ENCODE measurements at regions of chr10 and their contacts with region 1.

Region 1: GRCh38 chr10:24920907-24921881 is 31.2 kb downstream of the PRTFDC1 start:
- DNase-seq: peak; percentile 33
- H3K4me3 Mint-ChIP-seq: peak overlapping the region; percentile 53
- H3K27ac Mint-ChIP-seq: peak overlapping the region; percentile 92
- H3K4me1 Mint-ChIP-seq: peaks cover 30% of the 10 kb centered on the region
- H3K27me3 Mint-ChIP-seq: no peaks in the 10 kb centered on the region

Region 2: GRCh38 chr10:24706479-24707118 is 214.6 kb before region 1 on chr10:
- intact Hi-C with region 1: loop called (anchors 5 kb)
- DNase-seq: peak; percentile 26
- H3K4me3 Mint-ChIP-seq: no peak overlapping the region
- H3K27ac Mint-ChIP-seq: no peak overlapping the region
- H3K4me1 Mint-ChIP-seq: peaks cover 23% of the 10 kb centered on the region
- H3K27me3 Mint-ChIP-seq: no peaks in the 10 kb centered on the region

Region 3: DNA sequence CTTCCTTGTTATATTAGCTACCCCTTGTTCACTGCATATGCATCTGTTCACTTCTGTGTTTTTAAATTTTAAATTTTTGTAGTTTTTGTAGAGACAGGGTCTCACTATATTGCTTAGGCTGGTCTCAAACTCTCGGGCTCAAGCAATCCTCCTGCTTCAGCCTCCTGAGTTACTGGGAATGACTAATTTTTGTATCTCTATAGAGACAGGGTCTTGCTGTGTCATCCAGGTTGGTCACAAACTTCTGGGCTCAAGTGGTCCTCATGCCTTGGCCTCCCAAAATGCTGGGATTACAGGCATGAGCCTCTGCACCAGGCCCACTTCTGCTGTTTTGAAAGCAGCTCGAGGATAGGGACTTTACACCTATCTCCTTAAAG is 33.4 kb before region 1 on chr10:
- intact Hi-C with region 1: loop called (anchors 1 kb)
- DNase-seq: no peak
- H3K4me3 Mint-ChIP-seq: peak overlapping the region; percentile 21
- H3K27ac Mint-ChIP-seq: peak overlapping the region; percentile 69
- H3K4me1 Mint-ChIP-seq: peaks cover 30% of the 10 kb centered on the region
- H3K27me3 Mint-ChIP-seq: no peaks in the 10 kb centered on the region

Region 4: GRCh38 chr10:24947304-24948097 is 26.3 kb after region 1 on chr10:
- intact Hi-C with region 1: loop called (anchors 1 kb)
- DNase-seq: no peak
- H3K4me3 Mint-ChIP-seq: no peak overlapping the region
- H3K27ac Mint-ChIP-seq: no peak overlapping the region
- H3K4me1 Mint-ChIP-seq: peaks cover 13% of the 10 kb centered on the region
- H3K27me3 Mint-ChIP-seq: peaks cover 2% of the 10 kb centered on the region